IMR-90 (cell line): ENCODE measurements at regions of chr2 and their contacts with region 1.

Region 1: GRCh38 chr2:68807821-68808266 is 63.4 kb downstream of the BMP10 start:
- DNase-seq: peak; percentile 12
- ATAC-seq: no peak; the same call in 1 of the 2 replicates
- H3K4me3 ChIP-seq: no peak overlapping the region
- H3K27ac ChIP-seq: no peak overlapping the region
- H3K4me1 ChIP-seq: peaks cover 10% of the 10 kb centered on the region
- H3K27me3 ChIP-seq: peaks cover 2% of the 10 kb centered on the region
- CTCF ChIP-seq: no peak
- POLR2A ChIP-seq: no peak
- RAD21 ChIP-seq: no peak

Region 2: DNA sequence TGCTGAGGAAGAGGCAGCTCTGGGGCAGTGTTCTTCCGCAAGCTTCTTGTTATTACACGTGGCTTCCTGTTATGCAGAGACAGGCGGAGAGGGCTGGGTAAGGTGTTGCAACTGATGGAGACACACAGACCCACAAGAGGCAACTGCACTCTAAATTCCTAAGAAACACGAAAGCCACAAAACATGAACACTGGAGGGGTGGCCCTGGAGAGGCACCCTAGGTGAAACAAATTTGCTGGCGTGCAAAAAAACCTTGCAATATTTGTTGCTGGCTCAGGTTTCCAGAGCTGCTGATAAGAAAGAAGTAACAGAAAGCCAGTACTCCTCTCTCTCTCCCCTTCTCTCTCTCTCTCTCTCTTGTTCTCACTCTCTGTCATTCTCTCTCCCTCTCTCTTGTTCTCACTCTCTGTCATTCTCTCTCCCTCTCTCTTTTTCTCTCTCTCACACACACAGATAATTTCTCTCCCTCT is 41.4 kb before region 1 on chr2:
- CTCF ChIA-PET with region 1: interaction called, 3 read pairs
- POLR2A ChIA-PET with region 1: no interaction called
- dilution Hi-C with region 1: no loop called
- in situ Hi-C with region 1: no loop called
- intact Hi-C with region 1: loop called (anchors 5 kb)
- DNase-seq: peak; percentile 73
- ATAC-seq: peak; percentile 53
- H3K4me3 ChIP-seq: no peak overlapping the region
- H3K27ac ChIP-seq: peak overlapping the region; percentile 11; the same call in 1 of the 2 replicates
- H3K4me1 ChIP-seq: peaks cover 37% of the 10 kb centered on the region
- H3K27me3 ChIP-seq: no peaks in the 10 kb centered on the region
- CTCF ChIP-seq: no peak
- POLR2A ChIP-seq: no peak
- RAD21 ChIP-seq: no peak